ENCODE measurements at regions of chr5 and their contacts with region 1.

Region 1: DNA sequence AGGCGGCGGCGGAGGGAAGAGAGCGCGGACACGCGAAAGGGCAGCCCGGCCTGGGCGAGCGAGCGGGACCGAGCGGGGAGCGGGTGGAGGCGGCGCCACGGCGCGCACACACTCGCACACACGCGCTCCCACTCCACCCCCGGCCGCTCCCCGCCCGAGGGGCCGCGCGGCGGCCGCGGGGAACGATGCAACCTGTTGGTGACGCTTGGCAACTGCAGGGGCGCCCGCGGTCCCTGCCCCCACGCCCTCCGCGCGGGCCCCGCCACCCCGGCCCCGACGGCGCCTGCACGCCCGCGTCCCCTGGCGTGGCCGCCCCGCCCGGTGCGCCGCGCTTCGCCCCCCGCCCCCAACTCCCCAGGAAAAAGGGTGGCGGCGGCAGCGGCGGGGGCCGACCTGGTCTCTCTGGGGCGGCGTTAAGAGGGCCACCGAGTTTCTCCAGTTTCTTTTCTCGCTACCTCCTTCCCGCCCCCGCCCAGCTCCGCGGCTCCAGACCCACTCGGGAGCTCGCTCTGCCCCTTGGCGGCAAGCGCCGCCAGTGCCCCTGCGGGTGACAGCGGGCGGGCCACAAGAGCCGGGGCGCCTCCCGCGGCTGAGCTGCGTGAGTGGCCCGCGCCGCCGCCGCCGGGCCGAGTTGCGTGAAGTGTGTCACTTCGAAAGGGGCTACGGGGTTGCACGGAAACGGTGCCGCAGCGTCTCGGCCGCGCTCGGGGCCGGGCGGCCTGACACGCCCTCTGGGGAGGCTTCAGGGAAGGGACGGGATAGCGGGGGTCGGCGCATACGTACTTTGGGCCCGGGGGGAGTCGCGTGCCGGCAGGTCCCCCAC is at the start of gene NR3C1:
- DNase-seq: peak; percentile 89
- ATAC-seq: peak; percentile 58
- H3K4me3 Mint-ChIP-seq: peak within 1 kb of the TSS; percentile 91
- H3K27ac Mint-ChIP-seq: peak within 1 kb of the TSS; percentile 97
- H3K4me1 Mint-ChIP-seq: peaks cover 41% of the 10 kb centered on the region
- H3K27me3 Mint-ChIP-seq: no peaks in the 10 kb centered on the region
- total RNA-seq, gene NR3C1: 47.1 to 53.9 TPM

Region 2: DNA sequence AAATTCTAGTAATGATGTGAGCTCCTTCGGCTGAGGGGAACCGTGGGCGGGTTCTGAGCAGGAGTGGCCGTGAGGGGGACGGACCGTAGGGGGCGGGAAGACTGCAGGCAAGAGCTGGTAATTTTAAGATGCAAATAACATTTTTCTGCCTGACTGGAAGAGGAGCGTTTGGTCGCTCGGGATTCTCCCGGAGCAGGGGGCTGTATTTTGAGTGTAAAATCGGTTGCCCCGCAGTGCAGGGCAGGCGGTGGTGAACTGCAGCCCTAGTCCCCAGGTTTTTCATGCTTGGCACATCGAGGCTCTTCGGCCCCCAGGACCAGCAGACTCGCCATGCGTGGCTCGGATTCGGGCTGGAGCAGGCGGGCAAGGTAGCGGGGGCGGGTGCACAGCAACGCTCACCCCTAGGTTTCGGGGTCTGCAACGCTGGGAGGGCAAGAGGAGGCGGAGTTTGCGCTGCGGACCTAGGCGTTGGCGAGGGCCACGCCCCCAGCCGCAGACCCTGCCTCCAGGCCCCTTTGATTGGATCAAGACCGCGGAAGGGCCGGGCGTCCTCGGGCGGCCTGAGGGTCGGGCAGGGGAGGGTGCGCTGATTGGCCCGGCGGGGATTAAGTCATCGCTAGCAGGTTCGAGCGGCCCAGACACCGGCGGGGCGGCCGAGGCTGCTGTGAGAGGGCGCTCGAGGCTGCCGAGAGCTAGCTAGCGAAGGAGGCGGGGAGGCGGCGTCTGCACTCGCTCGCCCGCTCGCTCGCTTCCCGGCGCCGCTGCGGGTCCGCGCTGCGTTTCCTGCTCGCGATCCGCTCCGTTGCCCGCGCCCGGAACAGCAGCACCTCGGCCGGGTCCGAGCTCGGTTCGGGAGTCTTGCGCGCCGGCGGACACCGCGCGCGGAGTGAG is 633.8 kb before region 1 on chr5 and contains the start of gene ARHGAP26:
- CTCF ChIA-PET with region 1: no interaction called
- POLR2A ChIA-PET with region 1: no interaction called
- intact Hi-C with region 1: loop called in 1 of 2 experiments (anchors 2 kb)
- DNase-seq: peak; percentile 96
- ATAC-seq: peak; percentile 91
- H3K4me3 Mint-ChIP-seq: peak within 1 kb of the TSS; percentile 84
- H3K27ac Mint-ChIP-seq: peak within 1 kb of the TSS; percentile 88
- H3K4me1 Mint-ChIP-seq: peaks cover 40% of the 10 kb centered on the region
- H3K27me3 Mint-ChIP-seq: no peaks in the 10 kb centered on the region
- total RNA-seq, gene ARHGAP26: 12.8 to 15.4 TPM

Region 3: GRCh38 chr5:143008809-143009521 is 394.8 kb before region 1 on chr5:
- CTCF ChIA-PET with region 1: interaction called, 5 read pairs
- POLR2A ChIA-PET with region 1: no interaction called
- intact Hi-C with region 1: loop called in 1 of 2 experiments (anchors 1 kb)
- DNase-seq: peak; percentile 87
- ATAC-seq: peak; percentile 91
- H3K4me3 Mint-ChIP-seq: peak overlapping the region; percentile 34
- H3K27ac Mint-ChIP-seq: peak overlapping the region; percentile 83
- H3K4me1 Mint-ChIP-seq: peaks cover 56% of the 10 kb centered on the region
- H3K27me3 Mint-ChIP-seq: no peaks in the 10 kb centered on the region

Region 4: GRCh38 chr5:143222287-143223231 is 181.2 kb before region 1 on chr5:
- CTCF ChIA-PET with region 1: interaction called, 3 read pairs
- POLR2A ChIA-PET with region 1: no interaction called
- intact Hi-C with region 1: loop called in 1 of 2 experiments (anchors 5 kb)
- DNase-seq: peak; percentile 62
- ATAC-seq: peak; percentile 68
- H3K4me3 Mint-ChIP-seq: peak overlapping the region; percentile 25
- H3K27ac Mint-ChIP-seq: peak overlapping the region; percentile 92
- H3K4me1 Mint-ChIP-seq: peaks cover 46% of the 10 kb centered on the region
- H3K27me3 Mint-ChIP-seq: no peaks in the 10 kb centered on the region

Region 5: GRCh38 chr5:143355720-143356119 is 48.1 kb before region 1 on chr5:
- CTCF ChIA-PET with region 1: interaction called, 6 read pairs
- POLR2A ChIA-PET with region 1: interaction called, 7 read pairs
- intact Hi-C with region 1: loop called (anchors 2 kb)
- DNase-seq: peak; percentile 59
- ATAC-seq: peak; percentile 34
- H3K4me3 Mint-ChIP-seq: no peak overlapping the region
- H3K27ac Mint-ChIP-seq: no peak overlapping the region
- H3K4me1 Mint-ChIP-seq: peaks cover 77% of the 10 kb centered on the region
- H3K27me3 Mint-ChIP-seq: no peaks in the 10 kb centered on the region

Region 6: GRCh38 chr5:143648696-143649095 is 244.9 kb after region 1 on chr5:
- CTCF ChIA-PET with region 1: no interaction called
- POLR2A ChIA-PET with region 1: no interaction called
- intact Hi-C with region 1: loop called (anchors 2 to 5 kb)
- DNase-seq: peak; percentile 26
- ATAC-seq: no peak
- H3K4me3 Mint-ChIP-seq: no peak overlapping the region
- H3K27ac Mint-ChIP-seq: no peak overlapping the region
- H3K4me1 Mint-ChIP-seq: peaks cover 17% of the 10 kb centered on the region
- H3K27me3 Mint-ChIP-seq: no peaks in the 10 kb centered on the region

Region 7: DNA sequence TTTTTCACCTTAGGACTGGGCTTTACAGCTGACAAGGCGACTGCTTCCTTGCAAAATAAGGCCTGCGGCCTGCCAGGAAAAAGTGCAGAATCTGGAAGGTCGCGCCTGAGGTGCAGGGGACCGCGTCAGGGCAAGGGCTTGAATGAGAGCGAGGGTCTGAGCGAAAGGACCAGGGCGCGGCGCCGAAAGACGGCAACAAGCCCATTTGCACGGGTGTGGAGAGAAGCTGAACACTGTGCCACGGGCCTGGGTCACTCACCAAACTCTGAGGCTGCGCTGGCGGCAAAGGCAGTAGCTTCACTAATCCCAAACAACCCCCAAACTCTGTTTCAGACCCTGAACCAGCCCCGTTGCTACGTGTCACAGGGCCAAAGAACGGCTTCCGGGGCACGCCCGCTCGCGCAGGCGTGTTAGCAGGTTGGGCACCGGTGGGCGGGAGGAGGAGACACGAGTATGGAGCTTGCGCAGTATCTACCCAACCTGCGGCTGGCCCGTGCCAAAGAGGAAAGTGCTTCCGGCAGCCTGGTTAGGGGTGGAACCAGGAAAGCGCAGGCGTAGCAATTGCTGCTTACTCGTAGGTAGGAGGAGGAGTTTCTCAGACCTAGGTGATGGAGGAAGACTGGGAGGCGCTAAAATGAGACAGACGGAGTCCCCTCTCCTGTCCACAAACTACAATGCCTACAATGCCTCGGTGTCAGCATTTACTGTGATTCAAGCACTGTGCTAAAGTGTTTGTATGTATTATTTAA is 766.6 kb after region 1 on chr5 and contains the starts of genes KCTD16 and YIPF5:
- CTCF ChIA-PET with region 1: no interaction called
- POLR2A ChIA-PET with region 1: no interaction called
- intact Hi-C with region 1: loop called in 1 of 2 experiments (anchors 1 kb)
- DNase-seq: peak; percentile 98
- ATAC-seq: peak; percentile 98
- H3K4me3 Mint-ChIP-seq: peak within 1 kb of the TSS; percentile 99
- H3K27ac Mint-ChIP-seq: peak within 1 kb of the TSS; percentile 96
- H3K4me1 Mint-ChIP-seq: peaks cover 43% of the 10 kb centered on the region
- H3K27me3 Mint-ChIP-seq: no peaks in the 10 kb centered on the region
- total RNA-seq, gene KCTD16: 0.14 to 0.25 TPM
- total RNA-seq, gene YIPF5: 39.1 to 44.2 TPM

Measured in activated CD4-positive, alpha-beta T cell treated with anti-CD3 and anti-CD28 coated beads for 36 hours (primary cell).